ENCODE measurements at regions of chr11 and their contacts with region 1.

Region 1: DNA sequence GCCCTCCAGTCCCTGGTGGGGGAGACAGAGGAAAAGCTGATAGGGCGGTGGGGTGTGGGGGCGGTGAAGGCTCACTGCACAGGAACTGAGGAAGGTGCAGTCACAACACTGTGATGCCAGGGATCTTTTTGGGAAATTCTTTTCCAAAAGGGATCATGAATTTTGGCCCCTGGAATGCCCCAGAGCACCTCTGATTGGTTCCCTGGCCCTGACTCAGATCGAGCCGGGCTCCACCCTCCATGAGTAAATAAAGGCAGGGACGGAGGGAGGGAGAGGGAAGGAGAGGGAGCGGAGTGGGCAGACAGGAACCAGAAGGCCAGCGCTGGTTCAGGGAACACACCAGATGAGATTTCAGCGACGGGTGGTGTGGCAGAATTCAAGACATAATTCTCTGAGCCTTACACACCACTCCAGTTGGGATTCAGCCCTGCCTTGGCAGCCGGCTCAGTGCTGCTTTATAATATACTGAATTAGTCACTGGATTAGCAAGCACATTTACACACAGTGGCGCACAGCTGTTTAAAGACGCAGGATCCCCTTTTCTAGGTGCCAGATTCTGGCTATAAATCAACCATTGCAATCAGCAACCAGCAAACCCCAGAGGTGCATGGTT is 80.3 kb downstream of the ETS1 start:
- DNase-seq: no peak
- H3K4me3 Mint-ChIP-seq: peak overlapping the region; percentile 96
- H3K27ac Mint-ChIP-seq: peak overlapping the region; percentile 98
- H3K4me1 Mint-ChIP-seq: peaks cover 100% of the 10 kb centered on the region
- H3K27me3 Mint-ChIP-seq: peaks cover 1% of the 10 kb centered on the region

Region 2: DNA sequence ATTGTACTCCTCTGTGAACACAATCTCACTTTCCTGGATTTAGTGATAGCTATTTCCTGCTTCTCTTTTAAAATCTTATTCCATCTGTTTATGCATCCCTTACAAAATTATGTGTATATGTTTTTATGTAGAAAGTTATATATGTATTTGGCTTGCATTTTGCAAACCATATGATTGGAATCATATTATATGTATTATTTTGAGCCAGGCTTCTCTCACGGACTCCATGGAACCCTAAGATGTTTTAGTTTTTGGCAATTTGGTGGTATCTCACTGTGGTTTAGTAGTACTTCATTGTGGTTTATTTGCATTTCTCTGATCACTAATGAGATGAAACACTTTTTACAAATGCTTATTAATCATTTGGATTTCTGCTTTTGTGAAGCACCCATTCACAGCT is 999.3 kb before region 1 on chr11:
- intact Hi-C with region 1: no loop called
- DNase-seq: no peak
- H3K4me3 Mint-ChIP-seq: no peak overlapping the region
- H3K27ac Mint-ChIP-seq: no peak overlapping the region
- H3K4me1 Mint-ChIP-seq: no peaks in the 10 kb centered on the region
- H3K27me3 Mint-ChIP-seq: no peaks in the 10 kb centered on the region

Region 3: DNA sequence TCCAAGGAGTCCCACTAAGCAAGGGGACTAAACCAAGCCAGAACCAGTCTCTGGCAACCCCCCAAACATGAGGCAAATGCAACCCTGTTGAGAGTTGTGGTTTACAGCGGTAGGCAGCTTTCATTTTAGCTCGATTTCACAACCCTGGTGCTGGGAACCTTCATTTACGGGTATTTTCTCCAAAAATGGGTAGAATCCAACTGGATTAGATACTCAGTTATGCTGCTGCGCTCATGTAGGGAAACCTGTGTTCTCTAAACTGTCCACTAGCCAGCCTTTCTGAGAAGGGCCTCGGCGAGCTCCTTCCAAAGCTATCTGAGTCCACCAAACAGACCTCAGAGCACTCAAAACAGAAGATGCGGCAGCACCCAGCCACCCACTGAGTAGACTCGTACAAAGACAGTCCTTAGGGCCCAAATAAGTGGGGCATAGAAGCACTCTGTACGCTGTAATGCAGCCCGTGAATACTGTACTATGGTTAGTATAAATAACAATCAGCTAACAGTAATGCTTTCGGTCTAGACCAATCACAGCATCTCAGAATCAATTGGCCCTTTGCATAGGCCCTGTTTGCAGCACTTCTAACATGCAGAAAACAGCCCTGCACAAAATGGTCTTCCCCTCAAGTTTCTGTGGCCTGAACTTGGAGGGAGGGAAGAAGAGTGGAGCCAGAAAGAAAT is 24.5 kb before region 1 on chr11:
- intact Hi-C with region 1: loop called (anchors 1 kb)
- DNase-seq: no peak
- H3K4me3 Mint-ChIP-seq: peak overlapping the region; percentile 80
- H3K27ac Mint-ChIP-seq: peak overlapping the region; percentile 95
- H3K4me1 Mint-ChIP-seq: peaks cover 96% of the 10 kb centered on the region
- H3K27me3 Mint-ChIP-seq: no peaks in the 10 kb centered on the region

Region 4: DNA sequence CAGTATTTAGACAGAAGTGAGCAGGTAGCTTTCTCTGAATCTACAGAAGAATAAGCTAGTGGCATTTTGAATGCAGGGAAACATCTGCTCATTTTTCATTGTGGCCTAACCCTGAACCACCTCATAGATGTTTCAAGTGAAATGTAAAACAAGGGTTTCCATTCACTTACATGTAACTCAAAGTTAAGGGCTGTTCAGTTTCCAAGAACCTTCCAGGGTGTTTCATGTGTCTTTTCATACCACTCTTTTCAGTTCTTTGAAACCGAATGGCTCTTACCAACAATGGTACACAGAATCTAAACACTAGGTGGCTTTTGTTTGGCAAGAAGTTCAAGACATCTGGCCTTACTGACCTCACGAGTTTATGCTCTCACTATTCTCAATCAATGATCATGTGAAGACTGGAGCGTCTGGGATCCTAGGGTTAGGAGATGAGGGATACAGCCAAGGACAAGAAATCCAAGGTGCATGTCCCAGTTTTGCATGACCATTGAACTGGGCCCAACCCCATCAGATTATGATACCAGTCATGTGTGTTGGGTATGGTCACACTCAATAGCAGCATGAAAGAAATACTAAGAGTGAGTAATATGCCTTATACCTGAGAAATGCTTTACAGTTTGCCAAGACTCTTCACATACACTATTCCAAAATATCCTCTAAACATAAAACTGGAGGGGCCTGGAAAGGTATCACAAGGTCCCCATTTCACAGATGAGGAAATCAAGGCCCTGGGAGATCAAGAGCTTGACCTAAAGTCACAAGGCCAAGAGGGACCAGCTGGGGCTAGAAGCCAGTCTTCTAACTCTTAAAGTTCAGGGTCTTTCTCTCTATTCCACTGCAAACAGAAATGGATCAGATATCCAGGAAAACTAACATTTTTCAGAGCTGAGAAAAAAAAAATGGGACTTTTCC is 12.4 kb before region 1 on chr11:
- intact Hi-C with region 1: loop called (anchors 1 kb)
- DNase-seq: no peak
- H3K4me3 Mint-ChIP-seq: peak overlapping the region; percentile 74
- H3K27ac Mint-ChIP-seq: peak overlapping the region; percentile 98
- H3K4me1 Mint-ChIP-seq: peaks cover 98% of the 10 kb centered on the region
- H3K27me3 Mint-ChIP-seq: no peaks in the 10 kb centered on the region

Region 5: GRCh38 chr11:128552783-128553661 is 45.9 kb after region 1 on chr11:
- intact Hi-C with region 1: loop called (anchors 5 kb)
- DNase-seq: no peak
- H3K4me3 Mint-ChIP-seq: peak overlapping the region; percentile 0
- H3K27ac Mint-ChIP-seq: peak overlapping the region; percentile 53
- H3K4me1 Mint-ChIP-seq: peaks cover 60% of the 10 kb centered on the region
- H3K27me3 Mint-ChIP-seq: no peaks in the 10 kb centered on the region